Cardiac septum (tissue), 1 donor: ENCODE measurements at regions of chr10 and their contacts with region 1.

Region 1: GRCh38 chr10:92592761-92593618 is at the start of gene KIF11:
- DNase-seq: peak; percentile 99
- total RNA-seq, gene KIF11: 0.59 TPM

Region 2: DNA sequence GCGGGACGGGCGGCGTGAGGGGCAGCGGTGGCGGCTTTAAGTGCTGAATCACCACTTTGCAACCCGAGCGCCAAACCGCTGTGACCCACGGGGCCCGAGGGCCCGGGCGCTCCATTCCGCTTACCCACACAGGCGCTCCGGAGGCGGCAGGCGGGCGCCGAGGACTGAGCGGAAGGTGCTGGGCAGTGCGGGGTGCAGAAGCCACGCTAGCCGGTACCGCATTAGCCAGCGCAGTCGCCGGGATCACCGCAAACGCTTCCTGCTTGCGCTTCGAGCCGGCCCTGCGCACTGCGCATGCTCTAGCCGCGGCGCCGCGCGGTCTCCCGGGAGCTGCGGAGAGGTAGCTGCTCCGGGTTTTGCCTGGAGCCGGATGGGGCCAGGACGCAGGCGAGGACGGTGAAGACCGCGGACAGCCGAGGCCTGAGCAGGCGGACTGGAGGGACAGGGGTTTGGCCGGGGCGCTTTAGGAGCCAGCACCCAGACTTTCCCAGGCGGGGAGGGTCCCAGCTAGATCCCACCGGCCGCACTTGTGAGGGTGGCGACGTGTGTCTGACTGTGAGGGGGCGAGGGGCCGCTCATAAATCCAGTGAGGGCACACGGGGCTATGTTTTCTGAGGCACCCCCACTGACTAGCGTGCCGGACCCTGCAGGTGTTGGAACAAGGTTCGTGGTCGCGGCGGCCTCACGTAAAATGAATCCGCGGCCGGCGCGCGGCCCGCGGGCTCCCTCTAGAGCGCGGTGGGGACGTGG is 19.0 kb before region 1 on chr10 and contains the start of gene IDE:
- intact Hi-C with region 1: loop called (anchors 1 kb)
- DNase-seq: peak; percentile 95
- total RNA-seq, gene IDE: 44.4 TPM

Region 3: DNA sequence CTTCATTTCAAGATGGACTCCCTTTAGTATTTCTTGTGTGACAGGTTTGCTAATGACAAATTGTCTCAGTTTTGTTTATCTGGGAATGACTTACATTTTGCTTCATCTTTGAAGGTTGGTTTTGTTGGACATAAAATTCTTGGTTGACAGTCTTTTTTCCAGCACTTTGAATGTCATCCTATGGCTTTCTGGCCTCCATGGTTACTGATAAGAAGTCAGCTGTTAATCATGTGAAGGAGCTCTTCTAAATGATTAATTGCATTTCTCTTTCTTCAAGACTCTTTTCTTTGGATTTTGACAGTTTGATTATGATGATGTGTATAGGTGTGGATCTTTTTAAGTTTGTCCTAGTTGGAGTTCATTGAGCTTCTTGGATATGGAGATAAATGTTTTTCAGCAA is 69.9 kb after region 1 on chr10:
- intact Hi-C with region 1: no loop called
- DNase-seq: no peak

Region 4: DNA sequence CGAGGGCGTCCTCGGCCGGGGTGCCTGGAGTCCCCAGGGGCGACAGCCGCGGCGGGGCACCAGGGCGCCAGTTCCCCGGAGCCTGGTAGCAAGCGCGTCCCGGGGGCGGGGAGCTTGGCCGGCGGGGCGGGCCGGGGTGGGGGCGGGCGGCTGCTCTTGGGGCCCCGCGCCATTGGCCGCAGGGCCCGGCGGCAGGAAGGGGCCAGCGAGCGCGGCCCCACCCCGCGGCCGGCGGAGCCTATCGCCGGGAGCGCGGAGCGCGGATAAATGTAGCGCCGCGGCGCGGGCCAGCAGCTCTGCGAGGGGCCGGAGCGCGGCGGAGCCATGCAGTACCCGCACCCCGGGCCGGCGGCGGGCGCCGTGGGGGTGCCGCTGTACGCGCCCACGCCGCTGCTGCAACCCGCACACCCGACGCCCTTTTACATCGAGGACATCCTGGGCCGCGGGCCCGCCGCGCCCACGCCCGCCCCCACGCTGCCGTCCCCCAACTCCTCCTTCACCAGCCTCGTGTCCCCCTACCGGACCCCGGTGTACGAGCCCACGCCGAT is 96.7 kb after region 1 on chr10 and contains the start of gene HHEX:
- intact Hi-C with region 1: loop called (anchors 5 kb)
- DNase-seq: peak; percentile 85
- total RNA-seq, gene HHEX: 4.4 TPM

Region 5: GRCh38 chr10:92773776-92774175 is 180.8 kb after region 1 on chr10:
- intact Hi-C with region 1: no loop called
- DNase-seq: no peak

Region 6: DNA sequence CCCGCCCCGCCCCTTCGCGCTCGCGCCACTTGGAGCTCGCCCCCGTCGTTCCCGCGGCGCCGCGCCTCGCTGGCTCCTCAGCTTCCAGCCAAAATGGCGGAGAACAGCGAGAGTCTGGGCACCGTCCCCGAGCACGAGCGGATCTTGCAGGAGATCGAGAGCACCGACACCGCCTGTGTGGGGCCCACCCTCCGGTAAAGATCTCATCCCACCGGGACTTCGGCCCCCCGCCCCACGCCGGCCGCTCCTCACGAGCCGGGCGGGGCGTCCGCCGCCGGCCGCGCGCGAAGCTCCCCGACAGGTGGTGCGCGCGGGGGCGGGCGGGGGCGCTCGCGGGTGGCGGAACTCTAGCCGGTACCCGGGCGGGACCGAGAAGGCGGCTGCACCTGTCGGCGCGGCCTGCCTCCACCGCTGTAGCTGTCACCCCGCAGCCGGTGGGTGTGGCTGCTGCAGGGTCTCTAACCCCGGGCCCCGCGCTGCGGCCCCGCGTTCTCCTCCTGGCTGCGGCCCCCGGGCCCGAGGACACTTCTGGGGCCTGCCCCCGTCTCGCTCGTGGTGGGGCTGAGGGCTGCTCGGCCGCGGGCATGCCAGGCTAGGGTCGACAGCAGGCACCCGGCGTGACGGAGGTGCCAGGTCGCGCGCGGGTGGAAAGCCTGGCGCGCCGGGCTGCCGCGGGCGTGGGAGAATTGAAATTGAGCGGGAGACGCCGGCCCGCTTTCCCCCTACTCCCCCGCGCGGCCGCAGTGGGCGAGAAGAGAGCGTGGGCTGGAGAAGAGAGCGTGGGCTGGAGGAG is 255.6 kb after region 1 on chr10 and contains the start of gene EXOC6:
- intact Hi-C with region 1: loop called (anchors 5 kb)
- DNase-seq: peak; percentile 92
- total RNA-seq, gene EXOC6: 9.9 TPM

Region 7: DNA sequence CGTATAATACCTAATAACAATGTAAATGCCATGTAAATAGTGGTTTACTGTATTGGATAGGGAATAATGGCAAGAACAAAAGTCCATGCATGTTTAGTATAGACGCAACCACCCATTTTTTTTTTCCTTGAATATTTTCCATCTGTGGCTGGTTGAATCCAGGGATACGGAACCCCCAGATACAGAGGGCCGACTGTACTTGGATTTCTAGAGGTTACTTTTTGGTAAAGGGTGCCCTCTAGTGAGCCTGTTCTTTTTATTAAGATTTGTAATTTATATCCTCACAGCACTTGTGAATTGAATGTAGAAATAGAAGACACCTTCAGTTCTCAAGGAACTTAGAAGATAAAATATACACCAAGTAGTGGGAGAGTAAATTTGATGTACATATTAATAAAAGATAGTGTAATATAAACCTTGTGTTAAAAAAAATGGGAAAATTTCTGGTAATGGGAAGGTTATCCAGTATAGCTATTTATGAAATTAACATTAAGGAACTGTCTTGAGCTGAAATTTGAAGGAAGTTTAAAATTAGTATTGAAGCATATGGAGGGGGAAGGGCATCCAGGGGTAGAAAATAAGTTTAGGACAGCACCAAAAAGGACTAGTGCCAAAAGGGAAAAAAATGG is 287.4 kb after region 1 on chr10:
- intact Hi-C with region 1: loop called (anchors 10 kb)
- DNase-seq: no peak